Tibial artery (tissue), 4 donors: ENCODE measurements at regions of chr14 and their contacts with region 1.

Region 1: DNA sequence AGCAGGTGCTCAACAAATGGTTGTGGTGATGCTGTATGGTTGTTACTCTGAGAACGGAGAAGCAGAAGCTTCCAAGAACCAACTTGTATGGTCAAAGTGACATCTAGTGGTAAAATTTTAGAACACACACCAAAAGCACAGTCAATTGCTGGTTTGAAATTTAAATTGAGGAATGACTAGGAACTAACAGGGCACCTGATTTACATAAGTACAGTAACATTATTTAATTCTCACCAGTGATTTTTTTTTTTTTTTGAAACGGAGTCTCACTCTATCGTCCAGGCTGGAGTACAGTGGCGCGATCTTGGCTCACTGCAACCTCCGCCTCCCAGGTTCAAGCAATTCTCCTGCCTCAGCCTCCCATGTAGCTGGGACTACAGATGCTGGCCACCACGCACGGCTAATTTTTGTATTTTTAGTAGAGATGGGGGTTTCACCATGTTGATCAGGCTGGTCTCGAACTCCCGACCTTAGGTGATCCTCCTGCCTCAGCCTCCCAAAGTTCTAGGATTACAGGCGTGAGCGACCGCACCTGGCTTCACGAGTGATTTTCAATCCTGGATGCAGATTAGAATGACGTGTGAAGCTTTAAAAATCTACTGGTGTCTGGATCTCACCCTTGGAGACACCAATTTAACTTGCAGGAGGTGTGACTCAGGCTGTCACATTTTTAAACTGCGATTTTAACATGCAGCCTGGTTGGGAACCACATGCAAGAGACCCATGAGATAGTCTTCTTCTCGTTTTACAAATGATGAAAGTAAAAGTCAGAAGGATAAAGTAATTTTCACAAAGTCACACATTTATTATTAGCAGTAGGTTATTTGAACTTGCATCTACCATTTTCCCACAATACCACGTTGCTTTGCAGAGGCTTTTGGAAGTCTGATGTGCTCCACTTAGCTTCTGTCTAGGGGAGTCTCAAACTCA is 14.1 kb upstream of the NUMB start:
- DNase-seq: no peak
- H3K4me3 ChIP-seq: no peak overlapping the region
- H3K27ac ChIP-seq: no peak overlapping the region
- H3K4me1 ChIP-seq: no peaks in the 10 kb centered on the region
- H3K27me3 ChIP-seq: peaks cover 0 to 5% of the 10 kb centered on the region in 2 donors
- CTCF ChIP-seq: peak; percentile 60 to 79

Region 2: DNA sequence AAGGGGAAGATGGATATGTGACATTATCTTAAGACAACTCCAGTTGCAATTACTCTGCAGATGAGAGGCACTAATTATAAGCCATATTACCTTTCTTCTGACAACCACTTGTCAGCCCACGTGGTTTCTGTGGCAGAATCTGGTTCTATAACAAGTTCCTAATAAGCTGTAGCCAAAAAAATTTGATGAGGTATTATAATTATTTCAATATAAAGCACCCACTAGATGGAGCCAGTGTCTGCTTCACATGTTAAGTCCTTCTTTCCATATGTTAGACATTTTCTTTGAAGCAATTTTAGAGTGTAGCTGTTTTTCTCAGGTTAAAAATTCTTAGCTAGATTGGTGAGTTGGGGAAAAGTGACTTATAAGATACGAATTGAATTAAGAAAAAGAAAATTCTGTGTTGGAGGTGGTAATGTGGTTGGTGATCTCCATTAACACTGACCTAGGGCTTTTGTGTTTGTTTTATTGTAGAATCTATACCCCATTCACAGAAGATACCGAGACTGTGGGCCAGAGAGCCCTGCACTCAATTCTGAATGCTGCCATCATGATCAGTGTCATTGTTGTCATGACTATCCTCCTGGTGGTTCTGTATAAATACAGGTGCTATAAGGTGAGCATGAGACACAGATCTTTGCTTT is 299.2 kb before region 1 on chr14:
- intact Hi-C with region 1: loop called (anchors 5 kb)
- DNase-seq: no peak
- H3K4me3 ChIP-seq: no peak overlapping the region
- H3K27ac ChIP-seq: no peak overlapping the region
- H3K4me1 ChIP-seq: no peaks in the 10 kb centered on the region
- H3K27me3 ChIP-seq: no peaks in the 10 kb centered on the region
- CTCF ChIP-seq: peak; percentile 5 to 30

Region 3: GRCh38 chr14:73295198-73295796 is 177.2 kb before region 1 on chr14:
- intact Hi-C with region 1: loop called (anchors 2 kb)
- DNase-seq: no peak
- H3K4me3 ChIP-seq: no peak overlapping the region
- H3K27ac ChIP-seq: no peak overlapping the region
- H3K4me1 ChIP-seq: no peaks in the 10 kb centered on the region
- H3K27me3 ChIP-seq: no peaks in the 10 kb centered on the region
- CTCF ChIP-seq: peak; percentile 59 to 66

Region 4: GRCh38 chr14:73741386-73741875 is 269.0 kb after region 1 on chr14:
- intact Hi-C with region 1: no loop called
- DNase-seq: peak; percentile 74 to 88
- H3K4me3 ChIP-seq: peak overlapping the region; percentile 17 to 39
- H3K27ac ChIP-seq: peak overlapping the region; percentile 86 to 96
- H3K4me1 ChIP-seq: peaks cover 37 to 81% (median 78%) of the 10 kb centered on the region in 4 donors
- H3K27me3 ChIP-seq: no peaks in the 10 kb centered on the region
- CTCF ChIP-seq: no peak